CD4-positive, alpha-beta memory T cell (primary cell): ENCODE measurements at regions of chr6 and their contacts with region 1.

Region 1: GRCh38 chr6:152267967-152268845 is 369.0 kb downstream of the SYNE1 start:
- DNase-seq: peak in 4 of 5 donors; percentile 17 to 40 (median 24)
- H3K4me3 ChIP-seq: no peak overlapping the region
- H3K4me3 Mint-ChIP-seq: no peak overlapping the region
- H3K27ac ChIP-seq: no peak overlapping the region
- H3K27ac Mint-ChIP-seq: no peak overlapping the region
- H3K4me1 ChIP-seq: no peaks in the 10 kb centered on the region
- H3K4me1 Mint-ChIP-seq: peaks cover 0 to 2% (median 0%) of the 10 kb centered on the region in 4 donors
- H3K27me3 ChIP-seq: no peaks in the 10 kb centered on the region
- H3K27me3 Mint-ChIP-seq: no peaks in the 10 kb centered on the region

Region 2: GRCh38 chr6:151440930-151441329 is 827.3 kb before region 1 on chr6:
- CTCF ChIA-PET with region 1: no interaction called
- POLR2A ChIA-PET with region 1: no interaction called
- intact Hi-C with region 1: loop called (anchors 2 kb)
- DNase-seq: peak in 4 of 5 donors; percentile 11 to 32 (median 18)
- H3K4me3 ChIP-seq: no peak overlapping the region
- H3K4me3 Mint-ChIP-seq: peak overlapping the region in 1 of 8 donors; percentile 17
- H3K27ac ChIP-seq: no peak overlapping the region
- H3K27ac Mint-ChIP-seq: no peak overlapping the region
- H3K4me1 ChIP-seq: peaks cover 16% of the 10 kb centered on the region
- H3K4me1 Mint-ChIP-seq: peaks cover 27 to 54% (median 35%) of the 10 kb centered on the region in 4 donors
- H3K27me3 ChIP-seq: no peaks in the 10 kb centered on the region
- H3K27me3 Mint-ChIP-seq: no peaks in the 10 kb centered on the region

Region 3: DNA sequence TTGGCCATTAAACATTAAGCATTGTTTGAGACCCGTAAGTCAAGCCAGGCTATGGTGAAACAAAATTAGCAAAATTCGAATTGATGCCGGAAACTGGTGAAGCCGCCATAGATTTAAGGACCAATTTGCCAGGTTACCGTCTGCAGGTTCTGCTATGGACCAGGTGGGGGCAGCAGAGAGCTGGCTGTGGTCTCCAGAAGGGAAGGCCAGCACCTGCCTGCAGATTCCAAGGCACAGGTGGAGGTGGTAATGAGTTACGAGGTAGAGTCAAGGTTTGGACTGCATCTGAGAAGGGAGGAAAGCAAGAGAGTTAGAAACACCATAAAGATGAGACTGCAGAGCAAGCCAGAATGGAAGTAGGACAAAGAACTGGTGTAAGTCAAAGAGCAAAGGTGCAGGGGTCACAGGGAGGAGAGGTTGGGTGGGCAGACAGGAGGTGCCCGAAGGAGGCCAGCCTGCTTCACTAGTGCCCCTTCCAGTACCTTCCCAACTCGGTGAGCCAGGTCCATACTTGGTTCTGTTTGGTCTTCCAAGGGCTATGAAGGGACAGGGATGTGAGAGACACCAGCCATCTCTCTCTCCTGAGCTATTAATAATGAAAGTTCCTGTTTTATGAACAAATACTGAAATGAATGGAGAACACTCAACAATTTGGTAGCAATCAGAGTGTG is 592.3 kb before region 1 on chr6:
- CTCF ChIA-PET with region 1: interaction called, 7 read pairs
- POLR2A ChIA-PET with region 1: no interaction called
- intact Hi-C with region 1: loop called (anchors 1 kb)
- DNase-seq: peak; percentile 46 to 57 (median 48)
- H3K4me3 ChIP-seq: no peak overlapping the region
- H3K4me3 Mint-ChIP-seq: no peak overlapping the region
- H3K27ac ChIP-seq: no peak overlapping the region
- H3K27ac Mint-ChIP-seq: no peak overlapping the region
- H3K4me1 ChIP-seq: no peaks in the 10 kb centered on the region
- H3K4me1 Mint-ChIP-seq: peaks cover 0 to 2% (median under 1%) of the 10 kb centered on the region in 4 donors
- H3K27me3 ChIP-seq: no peaks in the 10 kb centered on the region
- H3K27me3 Mint-ChIP-seq: peaks cover 1 to 4% of the 10 kb centered on the region in 2 donors

Region 4: GRCh38 chr6:151765444-151765886 is 502.7 kb before region 1 on chr6:
- CTCF ChIA-PET with region 1: interaction called, 5 read pairs
- POLR2A ChIA-PET with region 1: no interaction called
- intact Hi-C with region 1: loop called (anchors 1 kb)
- DNase-seq: peak in 4 of 5 donors; percentile 35 to 43 (median 38)
- H3K4me3 ChIP-seq: no peak overlapping the region
- H3K4me3 Mint-ChIP-seq: no peak overlapping the region
- H3K27ac ChIP-seq: no peak overlapping the region
- H3K27ac Mint-ChIP-seq: no peak overlapping the region
- H3K4me1 ChIP-seq: no peaks in the 10 kb centered on the region
- H3K4me1 Mint-ChIP-seq: peaks cover 7 to 13% (median 11%) of the 10 kb centered on the region in 4 donors
- H3K27me3 ChIP-seq: no peaks in the 10 kb centered on the region
- H3K27me3 Mint-ChIP-seq: no peaks in the 10 kb centered on the region

Region 5: DNA sequence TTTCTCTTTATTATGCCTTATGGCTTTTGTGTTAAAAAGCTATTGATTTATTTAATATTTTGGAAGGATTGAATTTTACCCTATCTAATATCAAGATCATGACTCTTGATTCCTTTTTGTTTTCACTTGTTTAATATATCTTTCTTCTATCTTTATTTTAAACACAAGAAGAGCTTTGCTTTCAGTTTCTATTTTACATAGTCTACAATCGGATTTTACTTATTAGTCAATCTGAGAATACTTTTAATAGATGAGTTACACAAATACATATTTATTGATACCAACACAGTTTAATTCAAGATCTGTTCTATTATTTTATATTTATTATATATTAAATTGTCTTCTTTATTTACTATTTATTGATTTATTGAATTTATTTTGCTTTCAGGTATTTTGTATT is 241.9 kb before region 1 on chr6:
- CTCF ChIA-PET with region 1: no interaction called
- POLR2A ChIA-PET with region 1: no interaction called
- intact Hi-C with region 1: no loop called
- DNase-seq: no peak
- H3K4me3 ChIP-seq: no peak overlapping the region
- H3K4me3 Mint-ChIP-seq: peak overlapping the region; percentile 49 to 70 (median 56)
- H3K27ac ChIP-seq: no peak overlapping the region
- H3K27ac Mint-ChIP-seq: peak overlapping the region in 4 of 7 donors; percentile 7 to 60 (median 20)
- H3K4me1 ChIP-seq: peaks cover 10% of the 10 kb centered on the region
- H3K4me1 Mint-ChIP-seq: peaks cover 0 to 11% (median 4%) of the 10 kb centered on the region in 4 donors
- H3K27me3 ChIP-seq: no peaks in the 10 kb centered on the region
- H3K27me3 Mint-ChIP-seq: no peaks in the 10 kb centered on the region

Region 6: DNA sequence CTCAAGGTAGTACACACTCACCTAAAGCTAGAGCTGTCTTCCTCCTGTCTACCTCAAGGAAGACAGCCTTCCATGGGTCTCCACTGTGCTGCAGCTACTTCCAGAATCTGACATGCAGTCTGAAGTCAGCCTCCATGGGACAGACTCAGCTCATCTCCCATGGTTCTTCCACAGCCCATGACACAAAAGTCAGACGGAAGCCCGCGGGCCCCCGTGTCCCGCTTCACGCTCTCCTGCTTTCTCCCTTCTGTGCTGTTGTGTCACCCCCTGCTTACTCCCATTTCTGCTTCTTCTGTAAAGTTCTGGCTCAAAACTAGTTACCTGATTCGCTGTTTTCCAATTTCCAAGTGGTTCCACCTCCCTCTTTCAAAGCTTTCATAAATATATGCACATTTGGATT is 184.4 kb after region 1 on chr6:
- CTCF ChIA-PET with region 1: no interaction called
- POLR2A ChIA-PET with region 1: no interaction called
- intact Hi-C with region 1: no loop called
- DNase-seq: no peak
- H3K4me3 ChIP-seq: no peak overlapping the region
- H3K4me3 Mint-ChIP-seq: no peak overlapping the region
- H3K27ac ChIP-seq: no peak overlapping the region
- H3K27ac Mint-ChIP-seq: no peak overlapping the region
- H3K4me1 ChIP-seq: no peaks in the 10 kb centered on the region
- H3K4me1 Mint-ChIP-seq: no peaks in the 10 kb centered on the region
- H3K27me3 ChIP-seq: no peaks in the 10 kb centered on the region
- H3K27me3 Mint-ChIP-seq: peaks cover 7 to 9% of the 10 kb centered on the region in 2 donors

Region 7: DNA sequence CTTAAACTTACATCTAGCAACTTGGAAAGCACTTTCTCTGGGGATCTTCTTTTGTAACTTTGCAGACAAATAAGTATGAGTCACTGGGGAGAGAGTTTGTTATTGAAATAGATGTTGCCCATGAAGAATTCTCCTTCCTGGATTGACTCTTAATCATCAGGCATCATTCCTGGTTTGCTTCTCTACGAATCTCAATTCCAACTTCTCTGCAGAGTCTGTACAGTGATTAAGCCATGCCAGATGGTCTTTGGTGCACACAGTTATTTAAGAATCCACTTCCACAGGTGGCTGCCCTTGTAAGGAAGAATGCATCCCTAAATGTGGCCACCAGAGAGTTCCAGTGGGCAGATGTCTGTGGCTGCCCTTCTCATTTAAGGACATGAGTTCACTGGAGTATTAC is 455.2 kb after region 1 on chr6:
- CTCF ChIA-PET with region 1: no interaction called
- POLR2A ChIA-PET with region 1: no interaction called
- intact Hi-C with region 1: no loop called
- DNase-seq: no peak
- H3K4me3 ChIP-seq: no peak overlapping the region
- H3K4me3 Mint-ChIP-seq: no peak overlapping the region
- H3K27ac ChIP-seq: no peak overlapping the region
- H3K27ac Mint-ChIP-seq: no peak overlapping the region
- H3K4me1 ChIP-seq: no peaks in the 10 kb centered on the region
- H3K4me1 Mint-ChIP-seq: no peaks in the 10 kb centered on the region
- H3K27me3 ChIP-seq: no peaks in the 10 kb centered on the region
- H3K27me3 Mint-ChIP-seq: peaks cover 0 to 5% of the 10 kb centered on the region in 2 donors